ENCODE measurements at regions of chr5 and their contacts with region 1.

Region 1: GRCh38 chr5:140401362-140402257 is at the start of gene ANKHD1:
- DNase-seq: peak; percentile 98 to 100
- ATAC-seq: peak; percentile 93 to 97 (median 96)
- H3K4me3 ChIP-seq: peak within 1 kb of the TSS; percentile 76 to 99 (median 93)
- H3K27ac ChIP-seq: peak within 1 kb of the TSS; percentile 79 to 97 (median 94)
- H3K4me1 ChIP-seq: peaks cover 4 to 44% (median 38%) of the 10 kb centered on the region in 9 donors
- H3K27me3 ChIP-seq: no peaks in the 10 kb centered on the region
- CTCF ChIP-seq: no peak
- total RNA-seq, gene ANKHD1: 51.9 to 77.9 (median 68.5) TPM

Region 2: DNA sequence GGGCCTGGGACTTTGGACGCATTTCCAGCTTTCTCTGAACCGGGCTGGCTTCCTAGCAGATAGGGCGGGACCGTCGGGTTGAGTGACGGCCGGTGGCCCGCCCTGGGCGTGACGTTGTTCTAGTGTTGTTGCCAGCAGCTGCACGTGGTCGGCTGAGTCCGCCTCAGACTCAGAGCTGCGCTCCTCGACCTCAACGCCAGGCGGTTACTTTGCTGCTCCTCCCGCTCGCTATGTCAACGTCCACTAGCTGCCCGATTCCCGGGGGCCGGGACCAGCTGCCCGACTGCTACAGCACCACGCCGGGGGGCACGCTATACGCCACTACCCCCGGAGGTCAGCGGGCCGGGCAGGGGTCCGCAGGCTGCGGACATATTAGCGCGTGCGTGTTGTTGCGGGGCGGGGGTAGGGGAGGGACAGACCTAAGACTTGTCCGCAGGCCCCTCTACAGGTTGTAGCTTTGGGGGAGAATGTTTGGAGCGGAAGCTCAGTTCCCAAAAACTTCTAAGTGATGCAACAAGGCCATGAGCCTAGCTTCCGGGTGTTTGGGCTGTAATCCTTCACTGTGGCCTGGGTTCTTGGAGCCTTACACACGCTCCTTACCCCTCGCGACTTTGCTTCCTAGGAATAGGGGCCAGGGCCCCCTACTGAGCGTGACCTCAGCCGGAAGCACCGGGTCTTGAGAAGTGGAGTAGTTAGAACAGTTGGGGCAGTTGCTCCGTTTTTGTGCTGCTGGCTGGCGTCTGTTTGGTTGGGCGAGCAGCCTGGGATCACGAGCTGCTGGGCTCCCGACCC is 146.1 kb after region 1 on chr5 and contains the start of gene EIF4EBP3:
- intact Hi-C with region 1: loop called in 2 of 10 experiments (anchors 5 kb)
- DNase-seq: peak; percentile 98
- ATAC-seq: peak; percentile 93 to 96 (median 96)
- H3K4me3 ChIP-seq: peak within 1 kb of the TSS in 9 of 10 donors; percentile 35 to 64 (median 57)
- H3K27ac ChIP-seq: peak within 1 kb of the TSS; percentile 77 to 97 (median 94)
- H3K4me1 ChIP-seq: peaks cover 27 to 53% (median 46%) of the 10 kb centered on the region in 9 donors
- H3K27me3 ChIP-seq: no peaks in the 10 kb centered on the region
- CTCF ChIP-seq: peak; percentile 46 to 78 (median 60)
- total RNA-seq, gene EIF4EBP3: 9.2 to 36.5 (median 21.5) TPM

Region 3: DNA sequence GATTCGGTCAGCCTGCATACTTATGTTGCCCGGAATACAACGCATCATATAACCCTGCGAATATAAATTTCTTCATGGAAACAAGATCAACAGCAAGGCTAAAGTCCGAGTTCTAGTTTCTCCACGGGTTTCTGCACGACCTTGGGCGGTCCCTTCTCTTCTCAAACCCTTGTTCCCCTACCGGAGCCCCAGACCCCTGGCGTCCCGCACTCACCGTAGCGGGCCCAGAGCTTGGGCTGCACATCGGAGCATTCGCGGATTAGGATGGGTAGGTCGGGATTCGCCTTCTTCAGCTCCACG is 245.4 kb after region 1 on chr5:
- intact Hi-C with region 1: loop called in 2 of 10 experiments (anchors 10 kb)
- DNase-seq: no peak
- ATAC-seq: peak in 2 of 8 donors; percentile 3 to 5
- H3K4me3 ChIP-seq: peak overlapping the region; percentile 53 to 99 (median 90)
- H3K27ac ChIP-seq: peak overlapping the region; percentile 54 to 92 (median 86)
- H3K4me1 ChIP-seq: peaks cover 4 to 46% (median 26%) of the 10 kb centered on the region in 9 donors
- H3K27me3 ChIP-seq: no peaks in the 10 kb centered on the region
- CTCF ChIP-seq: no peak

Region 4: GRCh38 chr5:140690941-140691924 is 289.6 kb after region 1 on chr5 and contains the starts of genes HARS1 and HARS2:
- intact Hi-C with region 1: loop called in 1 of 10 experiments (anchors 10 kb)
- DNase-seq: peak; percentile 87 to 92
- ATAC-seq: peak; percentile 97 to 99 (median 98)
- H3K4me3 ChIP-seq: peak within 1 kb of the TSS; percentile 60 to 96 (median 83)
- H3K27ac ChIP-seq: peak within 1 kb of the TSS; percentile 65 to 96 (median 88)
- H3K4me1 ChIP-seq: peaks cover 0 to 44% (median 32%) of the 10 kb centered on the region in 9 donors
- H3K27me3 ChIP-seq: no peaks in the 10 kb centered on the region
- CTCF ChIP-seq: peak in 2 of 9 donors; percentile 30 to 38
- total RNA-seq, gene HARS1: 30.3 to 41.8 (median 35.8) TPM
- total RNA-seq, gene HARS2: 23.3 to 37.3 (median 30.0) TPM

Region 5: GRCh38 chr5:141320225-141321169 is 918.9 kb after region 1 on chr5 and contains the start of gene TAF7:
- intact Hi-C with region 1: loop called in 1 of 10 experiments (anchors 5 kb)
- DNase-seq: peak; percentile 90 to 93
- ATAC-seq: peak; percentile 99 to 100 (median 100)
- H3K4me3 ChIP-seq: peak within 1 kb of the TSS; percentile 56 to 96 (median 72)
- H3K27ac ChIP-seq: peak within 1 kb of the TSS; percentile 87 to 99 (median 92)
- H3K4me1 ChIP-seq: peaks cover 0 to 23% (median 13%) of the 10 kb centered on the region in 9 donors
- H3K27me3 ChIP-seq: no peaks in the 10 kb centered on the region
- CTCF ChIP-seq: peak; percentile 79 to 92 (median 87)
- total RNA-seq, gene TAF7: 93.4 to 111 (median 107) TPM